Activated B cell treated with CpG ODN at 0.5 μM for 24 hours (primary cell): ENCODE measurements at regions of chr6 and their contacts with region 1.

Region 1: DNA sequence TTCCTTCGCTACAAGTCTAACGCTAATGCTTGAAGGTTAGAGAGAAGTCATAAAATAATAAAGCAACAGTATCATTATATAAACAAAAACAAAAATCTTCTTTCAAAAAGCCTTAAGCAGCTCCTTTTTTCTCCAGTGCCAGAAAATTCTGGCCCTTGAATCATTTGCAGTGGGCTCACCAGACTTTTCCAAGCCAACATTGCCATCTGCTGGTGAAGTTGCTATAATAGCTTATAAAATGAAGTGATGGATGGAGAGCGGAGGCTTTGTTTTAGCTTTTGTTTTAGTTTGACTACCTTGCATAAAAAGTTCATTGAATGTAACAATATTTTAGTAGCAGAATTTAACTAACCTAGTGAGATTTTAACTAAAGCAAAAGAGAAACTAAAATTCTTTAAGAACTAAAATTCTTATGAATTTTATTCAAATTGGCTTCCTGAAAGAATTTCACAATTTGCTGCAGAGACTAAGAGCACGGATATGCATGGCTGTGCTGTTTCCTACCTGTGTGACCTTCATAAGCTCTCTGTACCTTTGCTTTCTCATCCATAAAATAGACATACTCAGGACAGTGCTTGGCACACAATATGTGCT is 44.8 kb upstream of the SLC2A12 start:
- DNase-seq: no peak
- ATAC-seq: peak; percentile 45
- H3K4me3 Mint-ChIP-seq: no peak overlapping the region
- H3K27ac Mint-ChIP-seq: no peak overlapping the region
- H3K4me1 Mint-ChIP-seq: peaks cover 4% of the 10 kb centered on the region
- H3K27me3 Mint-ChIP-seq: peaks cover 6% of the 10 kb centered on the region
- CTCF ChIP-seq: no peak

Region 2: GRCh38 chr6:132669690-132670291 is 1427.4 kb before region 1 on chr6:
- CTCF ChIA-PET with region 1: no interaction called
- POLR2A ChIA-PET with region 1: no interaction called
- intact Hi-C with region 1: loop called (anchors 5 kb)
- DNase-seq: no peak
- ATAC-seq: peak; percentile 68
- H3K4me3 Mint-ChIP-seq: peak overlapping the region; percentile 55
- H3K27ac Mint-ChIP-seq: no peak overlapping the region
- H3K4me1 Mint-ChIP-seq: peaks cover 5% of the 10 kb centered on the region
- H3K27me3 Mint-ChIP-seq: no peaks in the 10 kb centered on the region
- CTCF ChIP-seq: peak; percentile 49

Region 3: DNA sequence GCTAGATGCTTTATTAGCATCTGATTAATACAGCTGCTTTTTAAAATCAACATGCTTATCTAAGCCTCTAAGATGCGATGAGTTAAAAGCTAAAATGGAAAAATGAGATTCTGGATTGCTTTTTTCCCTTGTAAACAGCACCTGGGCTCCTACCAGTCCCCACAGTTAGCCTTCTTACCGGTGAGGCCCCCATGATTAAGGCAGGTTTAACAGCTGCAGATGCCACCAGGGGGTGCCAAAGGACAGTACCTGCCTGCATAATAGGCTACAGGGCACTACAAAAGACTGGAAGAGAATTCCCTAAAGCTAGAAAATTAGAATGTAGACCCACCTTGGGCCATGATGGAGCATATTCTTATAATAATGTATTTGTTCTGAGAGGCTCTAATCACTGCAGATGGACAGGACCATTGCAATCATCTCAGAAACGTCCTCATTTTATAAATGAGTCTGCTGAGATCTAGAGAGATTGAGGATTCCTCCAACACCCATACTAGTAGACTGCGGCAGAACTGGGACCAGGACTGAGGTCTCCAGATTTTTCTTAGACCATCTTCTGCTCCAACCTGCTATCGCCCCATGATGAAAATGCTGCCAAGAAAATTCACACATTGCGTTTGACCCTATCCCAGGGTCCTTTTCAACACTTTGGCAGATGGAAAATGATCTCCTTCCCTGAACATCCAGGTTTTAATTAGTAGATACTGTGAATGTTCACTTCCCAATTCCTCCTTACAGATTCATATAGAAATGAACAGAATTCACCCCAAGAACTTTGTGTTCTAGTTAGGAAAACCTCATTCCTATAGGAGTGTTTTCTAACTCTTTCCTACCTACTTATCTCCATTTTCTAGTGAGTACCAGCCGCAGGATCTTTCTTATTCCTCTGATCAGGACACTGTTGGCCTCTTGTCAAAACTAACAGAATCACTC is 1134.0 kb before region 1 on chr6:
- CTCF ChIA-PET with region 1: interaction called, 12 read pairs
- POLR2A ChIA-PET with region 1: no interaction called
- intact Hi-C with region 1: no loop called
- DNase-seq: peak; percentile 19
- ATAC-seq: peak; percentile 69
- H3K4me3 Mint-ChIP-seq: no peak overlapping the region
- H3K27ac Mint-ChIP-seq: no peak overlapping the region
- H3K4me1 Mint-ChIP-seq: no peaks in the 10 kb centered on the region
- H3K27me3 Mint-ChIP-seq: peaks cover 24% of the 10 kb centered on the region
- CTCF ChIP-seq: peak; percentile 56

Region 4: GRCh38 chr6:133170600-133170999 is 926.6 kb before region 1 on chr6:
- CTCF ChIA-PET with region 1: no interaction called
- POLR2A ChIA-PET with region 1: no interaction called
- intact Hi-C with region 1: no loop called
- DNase-seq: no peak
- ATAC-seq: no peak
- H3K4me3 Mint-ChIP-seq: no peak overlapping the region
- H3K27ac Mint-ChIP-seq: no peak overlapping the region
- H3K4me1 Mint-ChIP-seq: no peaks in the 10 kb centered on the region
- H3K27me3 Mint-ChIP-seq: no peaks in the 10 kb centered on the region
- CTCF ChIP-seq: no peak

Region 5: GRCh38 chr6:133568970-133569889 is 528.0 kb before region 1 on chr6:
- CTCF ChIA-PET with region 1: no interaction called
- POLR2A ChIA-PET with region 1: no interaction called
- intact Hi-C with region 1: loop called (anchors 5 kb)
- DNase-seq: no peak
- ATAC-seq: no peak
- H3K4me3 Mint-ChIP-seq: no peak overlapping the region
- H3K27ac Mint-ChIP-seq: no peak overlapping the region
- H3K4me1 Mint-ChIP-seq: peaks cover 4% of the 10 kb centered on the region
- H3K27me3 Mint-ChIP-seq: peaks cover 27% of the 10 kb centered on the region
- CTCF ChIP-seq: no peak

Region 6: DNA sequence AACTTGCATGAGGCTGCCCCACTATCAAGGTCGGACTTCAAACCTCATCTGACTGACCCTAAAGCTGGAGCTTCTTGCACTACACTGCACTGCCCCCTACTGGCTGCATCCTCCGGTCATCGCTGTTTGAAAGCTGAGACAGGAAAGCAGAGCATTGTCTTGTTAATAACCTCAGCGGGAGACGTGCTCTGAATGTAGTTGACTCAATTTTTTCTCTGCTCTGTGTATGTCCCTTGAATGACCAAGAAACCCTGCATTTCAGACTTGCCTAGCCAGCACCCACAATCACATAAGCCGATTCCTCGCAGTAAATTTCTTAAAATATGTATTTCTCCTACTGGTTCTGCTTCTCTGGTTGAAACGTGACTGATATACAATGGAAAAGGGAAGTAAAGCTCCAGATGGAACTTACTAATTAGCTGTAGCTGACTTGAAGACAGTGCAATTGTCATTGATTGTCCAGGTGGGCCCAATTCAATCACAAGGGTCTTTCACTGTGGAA is 180.5 kb before region 1 on chr6:
- CTCF ChIA-PET with region 1: interaction called, 394 read pairs
- POLR2A ChIA-PET with region 1: no interaction called
- intact Hi-C with region 1: no loop called
- DNase-seq: peak; percentile 40
- ATAC-seq: peak; percentile 34
- H3K4me3 Mint-ChIP-seq: no peak overlapping the region
- H3K27ac Mint-ChIP-seq: no peak overlapping the region
- H3K4me1 Mint-ChIP-seq: peaks cover 4% of the 10 kb centered on the region
- H3K27me3 Mint-ChIP-seq: peaks cover 17% of the 10 kb centered on the region
- CTCF ChIP-seq: peak; percentile 76

Region 7: DNA sequence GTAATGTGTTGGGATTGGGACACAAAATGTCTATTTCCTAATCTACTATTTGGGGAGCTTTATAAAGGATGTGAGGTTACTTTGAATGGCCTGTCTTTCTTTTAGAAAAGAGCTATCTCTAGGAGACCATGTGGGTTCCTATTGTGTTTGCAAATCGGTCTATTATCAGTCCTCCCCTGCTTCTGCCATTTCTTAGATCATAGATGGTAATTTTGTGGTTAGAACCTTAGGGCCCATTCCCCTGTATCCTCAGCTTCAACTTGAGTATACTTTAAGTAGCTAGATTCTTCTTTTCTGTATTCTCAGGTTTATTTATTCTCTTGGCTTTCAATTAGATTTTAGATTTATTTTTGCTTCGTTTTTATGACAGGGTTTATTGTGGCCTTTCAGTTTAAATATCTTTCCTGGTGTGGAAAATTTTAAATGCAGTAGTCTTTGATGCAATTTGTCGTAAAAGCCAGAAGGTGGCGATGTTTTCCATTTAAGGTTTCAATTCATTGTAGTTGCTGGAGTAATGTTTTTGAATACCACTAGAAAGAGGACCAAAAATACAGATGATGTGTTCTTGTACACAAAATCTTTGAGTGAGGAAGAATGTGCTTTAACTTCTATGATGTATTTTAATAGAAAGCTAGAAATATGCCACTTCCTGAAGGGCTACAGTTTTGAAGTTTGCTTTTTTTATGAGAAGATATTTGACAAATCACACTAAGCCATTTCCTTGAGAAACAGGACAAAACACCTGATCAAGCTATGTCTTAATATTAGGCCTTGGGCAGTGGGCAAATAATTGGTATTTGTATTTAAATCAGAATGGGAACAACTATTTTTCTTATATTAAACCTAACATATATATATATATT is 123.9 kb before region 1 on chr6:
- CTCF ChIA-PET with region 1: interaction called, 51 read pairs
- POLR2A ChIA-PET with region 1: no interaction called
- intact Hi-C with region 1: loop called (anchors 1 kb)
- DNase-seq: no peak
- ATAC-seq: peak; percentile 61
- H3K4me3 Mint-ChIP-seq: no peak overlapping the region
- H3K27ac Mint-ChIP-seq: no peak overlapping the region
- H3K4me1 Mint-ChIP-seq: peaks cover 21% of the 10 kb centered on the region
- H3K27me3 Mint-ChIP-seq: no peaks in the 10 kb centered on the region
- CTCF ChIP-seq: peak; percentile 86